ENCODE measurements at regions of chr3 and their contacts with region 1.

Region 1: GRCh38 chr3:192675958-192676649 is 51.2 kb downstream of the FGF12 start:
- DNase-seq: peak; percentile 42
- ATAC-seq: peak; percentile 77
- H3K4me3 Mint-ChIP-seq: peak overlapping the region; percentile 14
- H3K27ac Mint-ChIP-seq: peak overlapping the region; percentile 76
- H3K4me1 Mint-ChIP-seq: peaks cover 9% of the 10 kb centered on the region
- H3K27me3 Mint-ChIP-seq: peaks cover 13% of the 10 kb centered on the region

Region 2: DNA sequence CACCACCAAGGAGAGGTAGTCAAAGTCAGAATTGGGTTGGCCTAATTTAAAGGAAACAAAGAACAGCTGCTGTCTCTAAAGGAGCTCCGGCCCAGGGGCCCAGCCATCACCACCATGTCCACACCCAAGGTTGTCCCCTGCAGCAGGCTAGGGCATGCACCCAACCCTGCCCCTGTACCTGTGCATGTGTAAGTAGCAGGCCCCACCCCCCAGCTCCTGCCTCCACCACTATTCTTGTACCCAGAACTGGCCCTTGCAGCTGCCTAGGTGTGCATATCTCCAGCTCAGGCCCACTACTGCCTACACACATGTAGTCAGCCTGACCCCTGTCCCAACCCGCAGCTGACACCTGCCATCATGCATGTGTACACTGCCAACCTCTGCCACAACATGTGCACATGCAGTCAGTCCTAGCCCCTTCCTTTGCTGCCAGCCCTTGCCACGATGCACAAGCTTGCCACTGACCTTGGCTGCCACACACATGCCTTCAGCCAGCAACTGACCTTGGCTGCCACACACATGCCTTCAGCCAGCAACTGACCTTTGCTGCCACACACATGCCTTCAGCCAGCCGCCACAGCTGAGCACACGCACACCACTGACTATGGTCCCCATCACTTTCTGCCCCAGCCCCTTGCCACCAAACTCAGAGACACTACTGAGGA is 11.5 kb after region 1 on chr3:
- CTCF ChIA-PET with region 1: no interaction called
- POLR2A ChIA-PET with region 1: no interaction called
- intact Hi-C with region 1: no loop called
- DNase-seq: no peak
- ATAC-seq: no peak
- H3K4me3 Mint-ChIP-seq: no peak overlapping the region
- H3K27ac Mint-ChIP-seq: no peak overlapping the region
- H3K4me1 Mint-ChIP-seq: no peaks in the 10 kb centered on the region
- H3K27me3 Mint-ChIP-seq: peaks cover 4% of the 10 kb centered on the region

Region 3: GRCh38 chr3:192957441-192958021 is 281.4 kb after region 1 on chr3:
- CTCF ChIA-PET with region 1: no interaction called
- POLR2A ChIA-PET with region 1: no interaction called
- intact Hi-C with region 1: loop called in 1 of 2 experiments (anchors 5 kb)
- DNase-seq: peak; percentile 16
- ATAC-seq: peak; percentile 78
- H3K4me3 Mint-ChIP-seq: no peak overlapping the region
- H3K27ac Mint-ChIP-seq: peak overlapping the region; percentile 47
- H3K4me1 Mint-ChIP-seq: peaks cover 14% of the 10 kb centered on the region
- H3K27me3 Mint-ChIP-seq: peaks cover 10% of the 10 kb centered on the region